ENCODE measurements at regions of chr1 and their contacts with region 1.

Region 1: GRCh38 chr1:234599617-234600417 is 10.2 kb downstream of the IRF2BP2 start:
- DNase-seq: peak in 3 of 4 donors; percentile 86 to 95 (median 91)
- ATAC-seq: peak; percentile 85
- H3K4me3 ChIP-seq: peak overlapping the region; percentile 35 to 55
- H3K27ac ChIP-seq: peak overlapping the region; percentile 99 to 100
- H3K4me1 ChIP-seq: peaks cover 35 to 66% of the 10 kb centered on the region in 2 donors
- H3K27me3 ChIP-seq: no peaks in the 10 kb centered on the region
- CTCF ChIP-seq: no peak

Region 2: GRCh38 chr1:234533975-234534876 is 65.6 kb before region 1 on chr1:
- intact Hi-C with region 1: loop called in 1 of 2 experiments (anchors 10 kb)
- DNase-seq: peak in 3 of 4 donors; percentile 90 to 99 (median 98)
- ATAC-seq: peak; percentile 8
- H3K4me3 ChIP-seq: no peak overlapping the region
- H3K27ac ChIP-seq: peak overlapping the region; percentile 84 to 91
- H3K4me1 ChIP-seq: peaks cover 67 to 71% of the 10 kb centered on the region in 2 donors
- H3K27me3 ChIP-seq: no peaks in the 10 kb centered on the region
- CTCF ChIP-seq: no peak

Region 3: GRCh38 chr1:234980645-234981396 is 381.0 kb after region 1 on chr1:
- intact Hi-C with region 1: loop called in 1 of 2 experiments (anchors 10 kb)
- DNase-seq: peak in 3 of 4 donors; percentile 48 to 91 (median 85)
- ATAC-seq: peak; percentile 69
- H3K4me3 ChIP-seq: peak overlapping the region in 1 of 2 donors; percentile 36
- H3K27ac ChIP-seq: peak overlapping the region; percentile 87 to 99
- H3K4me1 ChIP-seq: peaks cover 53 to 99% of the 10 kb centered on the region in 2 donors
- H3K27me3 ChIP-seq: no peaks in the 10 kb centered on the region
- CTCF ChIP-seq: peak in 1 of 2 donors; percentile 13